HEK293 (cell line): ENCODE measurements at regions of chr1 and their contacts with region 1.

Region 1: DNA sequence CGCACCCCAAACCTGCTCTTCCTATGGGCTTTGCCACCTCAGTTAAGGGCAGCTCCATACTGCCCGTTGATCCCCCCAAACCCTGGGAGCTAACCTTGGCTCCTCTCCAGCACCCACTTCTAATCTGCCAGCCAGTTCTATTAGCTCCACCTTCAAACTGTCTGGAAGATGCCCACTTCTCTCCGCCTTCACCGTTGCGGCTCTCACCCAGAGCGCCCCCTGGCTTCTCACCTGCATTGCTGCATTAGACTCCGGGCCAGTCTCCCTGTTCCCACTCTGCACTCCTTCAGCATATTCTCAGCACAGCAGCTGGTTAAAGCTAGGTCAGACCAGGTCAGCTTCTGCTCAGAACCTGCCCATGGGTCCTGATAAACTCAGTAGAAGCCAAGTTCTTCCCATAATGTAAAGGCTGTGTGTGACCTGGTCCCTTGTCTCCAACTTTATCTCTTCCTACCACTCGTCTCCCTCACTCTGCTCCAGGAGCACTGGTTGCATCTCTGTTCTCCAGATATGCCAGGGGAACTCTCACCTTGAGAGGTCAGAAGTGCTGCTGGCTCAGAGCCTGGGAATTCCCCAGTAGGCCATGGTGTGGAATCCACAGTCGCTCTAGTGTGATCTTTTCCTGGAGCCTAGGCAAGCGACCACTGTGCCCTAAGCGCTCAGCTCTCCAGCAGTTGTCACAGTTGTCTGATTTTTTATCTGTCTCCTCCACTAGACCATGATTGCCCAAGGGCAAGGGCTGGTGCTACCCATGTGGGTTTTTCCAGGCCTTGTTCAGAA is 150.3 kb downstream of the HMGB4 start:
- H3K4me3 ChIP-seq: no peak overlapping the region
- H3K27ac ChIP-seq: no peak overlapping the region
- H3K4me1 ChIP-seq: no peaks in the 10 kb centered on the region
- CTCF ChIP-seq: peak; percentile 60

Region 2: DNA sequence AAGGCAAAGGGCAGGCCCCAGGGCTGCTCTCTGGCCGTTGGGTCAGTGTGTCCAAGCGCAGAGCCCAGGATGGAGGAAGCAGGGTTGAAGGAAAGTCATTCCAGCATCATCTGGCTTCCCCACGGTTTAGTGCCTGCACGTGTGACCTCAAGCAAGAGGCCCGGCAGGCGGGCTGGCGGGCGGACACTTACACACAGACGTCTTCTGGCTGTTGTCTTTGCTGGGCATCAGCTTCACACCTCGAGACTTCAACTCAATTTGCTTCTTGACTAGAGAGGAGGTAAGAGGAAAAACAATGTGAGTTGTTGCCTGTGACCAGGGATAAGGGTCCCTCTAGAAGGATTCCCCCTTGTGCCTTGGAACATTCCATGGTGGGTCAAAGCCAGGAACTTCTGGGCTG is 188.6 kb before region 1 on chr1:
- CTCF ChIA-PET with region 1: no interaction called
- POLR2A ChIA-PET with region 1: no interaction called
- H3K4me3 ChIP-seq: no peak overlapping the region
- H3K27ac ChIP-seq: no peak overlapping the region
- H3K4me1 ChIP-seq: no peaks in the 10 kb centered on the region
- CTCF ChIP-seq: no peak

Region 3: GRCh38 chr1:33997127-33998036 is 16.8 kb before region 1 on chr1:
- CTCF ChIA-PET with region 1: interaction called, 14 read pairs
- POLR2A ChIA-PET with region 1: no interaction called
- H3K4me3 ChIP-seq: no peak overlapping the region
- H3K27ac ChIP-seq: no peak overlapping the region
- H3K4me1 ChIP-seq: no peaks in the 10 kb centered on the region
- CTCF ChIP-seq: no peak

Region 4: DNA sequence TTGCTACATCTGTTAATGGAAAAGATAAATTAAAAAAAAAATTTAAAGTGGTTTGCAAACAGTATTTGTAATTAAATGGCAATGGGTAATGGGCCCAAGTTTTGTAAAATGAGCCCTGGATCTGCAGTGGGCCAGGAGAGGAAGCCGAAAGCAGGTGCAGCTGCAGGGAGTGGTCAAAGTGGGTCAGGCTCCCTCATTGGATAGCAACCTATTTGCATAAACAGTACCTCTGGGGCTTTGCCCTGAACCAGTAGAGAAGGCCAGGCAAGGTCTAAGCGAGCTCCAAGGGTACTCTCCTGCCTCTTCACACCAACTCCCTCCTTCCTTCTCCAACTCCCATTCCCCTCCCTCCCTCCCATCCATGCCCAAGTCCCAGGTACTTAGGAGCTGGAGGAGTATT is 11.3 kb before region 1 on chr1:
- CTCF ChIA-PET with region 1: interaction called, 14 read pairs
- POLR2A ChIA-PET with region 1: no interaction called
- H3K4me3 ChIP-seq: no peak overlapping the region
- H3K27ac ChIP-seq: no peak overlapping the region
- H3K4me1 ChIP-seq: no peaks in the 10 kb centered on the region
- CTCF ChIP-seq: no peak

Region 5: GRCh38 chr1:34024485-34024884 is 10.3 kb after region 1 on chr1:
- CTCF ChIA-PET with region 1: interaction called, 20 read pairs
- POLR2A ChIA-PET with region 1: no interaction called
- H3K4me3 ChIP-seq: no peak overlapping the region
- H3K27ac ChIP-seq: no peak overlapping the region
- H3K4me1 ChIP-seq: no peaks in the 10 kb centered on the region
- CTCF ChIP-seq: no peak

Region 6: GRCh38 chr1:34037109-34037508 is 23.0 kb after region 1 on chr1:
- CTCF ChIA-PET with region 1: interaction called, 10 read pairs
- POLR2A ChIA-PET with region 1: no interaction called
- H3K4me3 ChIP-seq: no peak overlapping the region
- H3K27ac ChIP-seq: no peak overlapping the region
- H3K4me1 ChIP-seq: no peaks in the 10 kb centered on the region
- CTCF ChIP-seq: no peak

Region 7: DNA sequence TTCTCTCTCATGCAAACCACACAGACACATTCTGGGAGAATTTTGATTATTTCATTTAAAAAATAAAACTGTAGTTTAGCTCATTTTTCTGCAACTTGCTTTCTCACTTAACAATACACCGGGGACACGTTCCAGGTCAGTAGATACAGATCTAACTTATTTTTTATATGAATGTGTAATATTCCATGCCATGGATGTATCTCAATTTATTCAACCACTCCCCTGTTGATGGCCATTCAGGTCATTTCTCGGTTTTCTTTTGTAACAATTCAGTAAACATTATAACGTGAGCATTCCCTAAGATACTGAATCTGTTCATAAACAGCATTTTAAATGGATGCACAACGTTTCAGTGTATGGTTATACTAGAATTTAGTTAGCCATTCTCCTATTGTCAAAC is 86.2 kb after region 1 on chr1:
- CTCF ChIA-PET with region 1: no interaction called
- POLR2A ChIA-PET with region 1: no interaction called
- H3K4me3 ChIP-seq: no peak overlapping the region
- H3K27ac ChIP-seq: no peak overlapping the region
- H3K4me1 ChIP-seq: no peaks in the 10 kb centered on the region
- CTCF ChIP-seq: no peak